ENCODE measurements at regions of chr14 and their contacts with region 1.

Region 1: GRCh38 chr14:22939684-22940083 is 10.5 kb upstream of the PRMT5 start:
- H3K4me3 ChIP-seq: no peak overlapping the region
- H3K27ac ChIP-seq: no peak overlapping the region
- H3K4me1 ChIP-seq: no peaks in the 10 kb centered on the region
- CTCF ChIP-seq: no peak

Region 2: GRCh38 chr14:22966783-22967269 is 27.1 kb after region 1 on chr14:
- CTCF ChIA-PET with region 1: interaction called, 11 read pairs
- POLR2A ChIA-PET with region 1: no interaction called
- H3K4me3 ChIP-seq: no peak overlapping the region
- H3K27ac ChIP-seq: no peak overlapping the region
- H3K4me1 ChIP-seq: peaks cover 5% of the 10 kb centered on the region; the same call in 1 of the 2 replicates
- CTCF ChIP-seq: no peak

Region 3: GRCh38 chr14:23052182-23052623 is 112.5 kb after region 1 on chr14:
- CTCF ChIA-PET with region 1: no interaction called
- POLR2A ChIA-PET with region 1: no interaction called
- H3K4me3 ChIP-seq: no peak overlapping the region
- H3K27ac ChIP-seq: no peak overlapping the region
- H3K4me1 ChIP-seq: peaks cover 4% of the 10 kb centered on the region; the same call in 1 of the 2 replicates
- CTCF ChIP-seq: peak; percentile 82

Measured in HEK293 (cell line).